ENCODE measurements at regions of chr14 and their contacts with region 1.

Region 1: GRCh38 chr14:69441948-69442347 is 42.6 kb upstream of the PLEKHD1 start:
- DNase-seq: no peak
- H3K4me3 ChIP-seq: no peak overlapping the region
- H3K27ac ChIP-seq: peak overlapping the region; percentile 17
- H3K4me1 ChIP-seq: peaks cover 10% of the 10 kb centered on the region
- H3K27me3 ChIP-seq: no peaks in the 10 kb centered on the region
- CTCF ChIP-seq: no peak

Region 2: GRCh38 chr14:69387311-69387710 is 54.6 kb before region 1 on chr14:
- CTCF ChIA-PET with region 1: no interaction called
- POLR2A ChIA-PET with region 1: interaction called, 10 read pairs
- intact Hi-C with region 1: no loop called
- DNase-seq: no peak
- H3K4me3 ChIP-seq: no peak overlapping the region
- H3K27ac ChIP-seq: no peak overlapping the region
- H3K4me1 ChIP-seq: no peaks in the 10 kb centered on the region
- H3K27me3 ChIP-seq: no peaks in the 10 kb centered on the region
- CTCF ChIP-seq: no peak

Region 3: DNA sequence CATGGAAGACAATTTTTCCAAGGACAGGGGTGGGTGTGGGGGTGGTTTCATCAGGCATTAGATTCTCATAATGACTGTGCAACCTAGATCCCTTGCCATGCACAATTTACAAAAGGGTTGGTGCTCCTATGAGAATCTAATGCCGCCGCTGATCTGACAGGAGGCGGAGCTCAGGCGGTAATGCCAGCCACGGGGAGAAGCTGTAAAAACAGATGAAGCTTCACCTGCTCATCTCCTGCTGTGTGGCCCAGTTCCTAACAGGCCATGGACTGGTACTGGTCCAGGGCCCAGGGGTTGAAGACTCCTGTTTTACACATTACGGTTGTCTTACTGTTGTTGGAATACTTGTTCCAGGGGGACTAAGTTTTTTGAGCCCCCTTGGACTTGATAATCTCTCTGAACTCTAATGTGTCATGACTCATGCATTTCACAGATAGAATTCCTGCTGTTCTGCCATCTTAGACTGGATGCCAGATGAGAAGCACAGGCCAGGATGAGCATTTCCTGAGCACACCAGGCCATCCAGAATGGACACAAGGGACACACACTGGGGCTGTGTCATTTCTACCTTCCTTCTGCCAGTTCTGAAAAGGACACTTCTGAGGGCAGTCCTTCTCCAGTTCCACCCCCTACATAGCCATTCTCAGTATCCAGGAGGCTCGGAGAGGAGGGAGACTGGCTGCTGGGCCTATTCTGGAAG is 48.4 kb after region 1 on chr14:
- CTCF ChIA-PET with region 1: no interaction called
- POLR2A ChIA-PET with region 1: no interaction called
- intact Hi-C with region 1: no loop called
- DNase-seq: peak; percentile 52
- H3K4me3 ChIP-seq: no peak overlapping the region
- H3K27ac ChIP-seq: no peak overlapping the region
- H3K4me1 ChIP-seq: peaks cover 23% of the 10 kb centered on the region
- H3K27me3 ChIP-seq: no peaks in the 10 kb centered on the region
- CTCF ChIP-seq: no peak

Measured in A673 (cell line).